MCF 10A (cell line): ENCODE measurements at regions of chr4 and their contacts with region 1.

Region 1: DNA sequence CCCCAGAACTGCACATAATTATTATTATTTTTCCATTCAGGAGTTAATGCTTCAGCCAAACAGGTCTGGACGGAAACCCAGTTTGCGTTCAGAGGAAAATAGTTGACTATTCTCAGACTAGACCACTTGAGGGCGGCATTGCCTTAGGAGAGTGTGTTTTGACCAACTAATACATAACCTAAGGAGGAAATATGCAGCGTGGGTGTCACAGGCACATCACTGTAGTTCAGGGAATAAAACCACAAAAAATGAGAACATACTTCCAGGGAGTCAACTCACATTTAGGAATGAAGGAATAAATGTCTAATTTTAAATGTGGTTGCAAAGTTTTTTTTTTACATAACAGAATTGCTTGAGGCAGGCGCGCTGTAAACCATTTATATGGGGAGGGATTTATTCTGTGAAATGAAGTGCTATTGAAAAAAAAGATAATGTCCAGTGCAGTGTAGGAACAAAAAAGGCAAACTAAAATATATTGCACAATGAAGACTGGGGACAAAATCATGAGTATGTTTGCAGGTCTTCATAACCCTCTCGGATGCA is 93.3 kb downstream of the SYNPO2 start:
- DNase-seq: peak; percentile 85
- H3K4me3 Mint-ChIP-seq: no peak overlapping the region
- H3K27ac Mint-ChIP-seq: no peak overlapping the region
- H3K4me1 Mint-ChIP-seq: peaks cover 5% of the 10 kb centered on the region
- H3K27me3 Mint-ChIP-seq: no peaks in the 10 kb centered on the region
- CTCF ChIP-seq: peak; percentile 75

Region 2: GRCh38 chr4:119025916-119026661 is 44.2 kb after region 1 on chr4:
- CTCF ChIA-PET with region 1: interaction called, 57 read pairs
- POLR2A ChIA-PET with region 1: interaction called, 152 read pairs
- intact Hi-C with region 1: no loop called
- DNase-seq: peak; percentile 88
- H3K4me3 Mint-ChIP-seq: peak overlapping the region; percentile 62
- H3K27ac Mint-ChIP-seq: peak overlapping the region; percentile 95
- H3K4me1 Mint-ChIP-seq: peaks cover 10% of the 10 kb centered on the region
- H3K27me3 Mint-ChIP-seq: no peaks in the 10 kb centered on the region
- CTCF ChIP-seq: peak; percentile 6

Region 3: DNA sequence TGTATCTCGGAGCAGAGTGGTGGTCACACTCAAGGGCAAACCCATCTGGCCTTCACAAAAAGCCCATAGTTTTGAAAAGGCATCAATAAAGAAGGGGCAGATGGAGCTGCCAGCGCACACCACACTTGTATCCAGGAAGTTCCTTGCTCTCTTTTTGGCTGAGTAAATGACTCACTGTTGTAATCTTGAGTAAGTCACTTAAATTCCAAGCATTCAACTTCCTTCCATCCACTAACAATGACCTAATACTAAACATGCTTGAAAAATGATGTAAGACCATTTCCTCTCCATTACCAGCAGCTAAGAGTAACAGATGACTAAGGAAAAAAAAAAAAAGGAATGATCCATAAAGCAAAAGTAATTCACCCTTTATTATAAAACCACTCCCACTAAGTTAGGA is 121.4 kb after region 1 on chr4:
- CTCF ChIA-PET with region 1: interaction called, 3 read pairs
- POLR2A ChIA-PET with region 1: no interaction called
- intact Hi-C with region 1: loop called (anchors 10 kb)
- DNase-seq: peak; percentile 93
- H3K4me3 Mint-ChIP-seq: peak overlapping the region; percentile 43
- H3K27ac Mint-ChIP-seq: peak overlapping the region; percentile 89
- H3K4me1 Mint-ChIP-seq: peaks cover 35% of the 10 kb centered on the region
- H3K27me3 Mint-ChIP-seq: no peaks in the 10 kb centered on the region
- CTCF ChIP-seq: no peak

Region 4: DNA sequence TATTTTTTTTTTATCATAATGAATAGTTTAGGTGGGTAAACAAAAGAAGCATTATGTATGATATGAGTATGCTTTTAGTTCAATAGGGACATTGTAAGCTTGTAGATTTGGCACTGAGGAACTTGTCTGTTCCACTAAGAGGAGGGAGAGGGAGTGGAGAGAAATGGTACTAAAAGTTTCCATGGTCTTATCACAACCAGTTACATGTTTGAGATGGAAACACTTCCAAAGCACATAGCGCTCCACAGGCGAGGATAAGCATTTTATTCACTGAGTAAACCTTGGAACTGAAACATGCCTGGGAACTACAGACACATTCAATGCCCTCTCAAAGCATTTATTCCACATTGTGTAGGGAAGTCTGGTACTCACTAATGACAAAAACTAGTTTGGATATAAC is 169.3 kb after region 1 on chr4:
- CTCF ChIA-PET with region 1: no interaction called
- POLR2A ChIA-PET with region 1: no interaction called
- intact Hi-C with region 1: no loop called
- DNase-seq: no peak
- H3K4me3 Mint-ChIP-seq: no peak overlapping the region
- H3K27ac Mint-ChIP-seq: no peak overlapping the region
- H3K4me1 Mint-ChIP-seq: no peaks in the 10 kb centered on the region
- H3K27me3 Mint-ChIP-seq: no peaks in the 10 kb centered on the region
- CTCF ChIP-seq: no peak

Region 5: DNA sequence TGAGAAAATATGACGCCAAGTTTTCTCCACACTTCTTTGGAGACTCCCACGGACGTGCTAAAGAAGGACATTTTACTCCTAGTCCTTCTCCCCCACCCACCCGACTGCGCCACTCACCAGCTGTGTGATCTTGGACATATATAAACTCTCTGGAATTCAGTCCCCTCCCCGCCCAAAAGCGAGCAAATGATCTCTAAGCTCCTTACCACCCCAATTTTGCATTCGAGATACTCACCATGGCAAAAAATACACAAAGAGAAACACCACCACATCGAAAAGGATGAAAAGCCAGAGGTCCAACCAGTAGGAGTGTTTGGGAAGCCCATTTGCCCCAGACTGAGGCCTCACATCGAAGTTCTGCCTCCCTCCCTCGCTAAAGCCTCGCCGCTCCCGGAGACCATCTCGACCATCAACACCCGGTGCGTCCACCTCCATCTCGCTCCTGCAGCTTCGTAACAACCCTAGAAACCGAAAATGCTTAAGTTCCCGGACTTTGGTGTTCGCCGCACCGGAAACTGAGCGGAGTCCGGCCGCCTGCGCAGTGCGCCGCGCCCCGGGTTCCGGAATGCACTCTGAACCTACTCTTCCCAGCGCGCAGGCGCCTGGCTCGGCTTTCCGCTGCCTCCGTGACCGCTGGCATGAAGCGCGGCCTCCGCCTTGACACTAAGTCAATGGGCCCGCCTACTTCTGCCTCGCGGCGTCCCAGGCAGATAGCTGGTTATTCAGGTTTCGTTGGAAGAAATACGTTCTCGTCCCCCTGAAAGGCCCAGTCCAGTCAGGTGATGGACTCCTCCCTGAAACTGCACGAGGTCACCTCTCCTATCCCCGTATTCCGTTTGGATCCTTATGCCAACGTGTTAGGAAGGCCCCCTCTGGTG is 318.4 kb after region 1 on chr4:
- CTCF ChIA-PET with region 1: interaction called, 33 read pairs
- POLR2A ChIA-PET with region 1: interaction called, 16 read pairs
- intact Hi-C with region 1: no loop called
- DNase-seq: peak; percentile 92
- H3K4me3 Mint-ChIP-seq: peak overlapping the region; percentile 93
- H3K27ac Mint-ChIP-seq: peak overlapping the region; percentile 97
- H3K4me1 Mint-ChIP-seq: peaks cover 12% of the 10 kb centered on the region
- H3K27me3 Mint-ChIP-seq: no peaks in the 10 kb centered on the region
- CTCF ChIP-seq: no peak

Region 6: GRCh38 chr4:119490335-119490734 is 508.4 kb after region 1 on chr4:
- CTCF ChIA-PET with region 1: interaction called, 9 read pairs
- POLR2A ChIA-PET with region 1: no interaction called
- intact Hi-C with region 1: loop called (anchors 1 kb)
- DNase-seq: peak; percentile 7
- H3K4me3 Mint-ChIP-seq: no peak overlapping the region
- H3K27ac Mint-ChIP-seq: no peak overlapping the region
- H3K4me1 Mint-ChIP-seq: no peaks in the 10 kb centered on the region
- H3K27me3 Mint-ChIP-seq: no peaks in the 10 kb centered on the region
- CTCF ChIP-seq: no peak

Region 7: GRCh38 chr4:120049732-120050494 is 1068.0 kb after region 1 on chr4:
- CTCF ChIA-PET with region 1: no interaction called
- POLR2A ChIA-PET with region 1: no interaction called
- intact Hi-C with region 1: loop called (anchors 1 kb)
- DNase-seq: peak; percentile 84
- H3K4me3 Mint-ChIP-seq: no peak overlapping the region
- H3K27ac Mint-ChIP-seq: no peak overlapping the region
- H3K4me1 Mint-ChIP-seq: peaks cover 13% of the 10 kb centered on the region
- H3K27me3 Mint-ChIP-seq: no peaks in the 10 kb centered on the region
- CTCF ChIP-seq: peak; percentile 73